ENCODE measurements at regions of chr17 and their contacts with region 1.

Region 1: DNA sequence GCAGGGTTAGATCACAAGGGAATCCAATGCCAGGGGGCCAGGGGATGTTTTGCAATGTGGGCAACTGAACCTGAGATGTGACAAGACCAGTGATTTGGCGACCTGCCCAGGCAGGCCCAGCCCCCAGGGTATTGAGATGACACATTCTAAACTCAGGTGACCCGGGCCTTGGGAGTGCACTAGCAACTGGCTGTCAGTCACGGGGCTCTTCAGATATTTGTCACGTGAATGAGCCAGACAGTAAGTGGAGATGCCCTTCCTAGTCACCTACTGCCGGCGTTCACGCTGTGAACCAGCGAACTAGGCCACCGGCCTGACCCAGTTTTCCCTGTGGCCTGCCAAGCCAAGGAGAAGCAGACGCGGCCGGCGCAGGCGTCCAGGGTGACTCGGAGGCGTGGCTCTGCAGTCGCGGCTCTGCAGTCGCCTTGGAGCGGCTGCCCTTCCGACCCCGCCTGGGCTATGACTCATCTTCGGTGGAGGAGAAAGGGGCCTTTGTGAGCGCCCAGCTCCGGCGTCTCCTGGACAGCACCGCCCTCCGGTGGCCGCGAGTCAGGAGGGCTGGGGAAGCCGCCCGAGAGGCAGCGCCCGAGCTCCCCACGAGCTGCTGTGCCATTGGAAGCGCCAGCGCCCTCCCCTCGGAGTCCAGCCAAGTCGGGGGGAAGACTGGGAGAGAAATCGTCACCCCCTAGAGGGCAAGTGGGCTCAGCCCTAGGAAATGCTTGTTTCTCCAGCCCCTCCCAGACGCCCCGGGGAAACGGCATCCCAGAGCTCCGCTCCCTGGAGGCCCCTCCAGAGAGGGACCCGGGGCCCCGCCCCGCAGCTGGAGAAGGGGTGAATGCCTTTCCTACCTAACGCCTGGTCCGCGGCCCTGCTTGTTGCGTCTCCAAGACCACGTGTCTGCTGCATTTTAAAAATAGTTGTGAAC is 38.8 kb downstream of the WSB1 start:
- H3K4me3 ChIP-seq: peak overlapping the region; percentile 48
- H3K27ac ChIP-seq: peak overlapping the region; percentile 84
- H3K4me1 ChIP-seq: peaks cover 2% of the 10 kb centered on the region; the same call in 1 of the 2 replicates
- CTCF ChIP-seq: peak; percentile 99

Region 2: DNA sequence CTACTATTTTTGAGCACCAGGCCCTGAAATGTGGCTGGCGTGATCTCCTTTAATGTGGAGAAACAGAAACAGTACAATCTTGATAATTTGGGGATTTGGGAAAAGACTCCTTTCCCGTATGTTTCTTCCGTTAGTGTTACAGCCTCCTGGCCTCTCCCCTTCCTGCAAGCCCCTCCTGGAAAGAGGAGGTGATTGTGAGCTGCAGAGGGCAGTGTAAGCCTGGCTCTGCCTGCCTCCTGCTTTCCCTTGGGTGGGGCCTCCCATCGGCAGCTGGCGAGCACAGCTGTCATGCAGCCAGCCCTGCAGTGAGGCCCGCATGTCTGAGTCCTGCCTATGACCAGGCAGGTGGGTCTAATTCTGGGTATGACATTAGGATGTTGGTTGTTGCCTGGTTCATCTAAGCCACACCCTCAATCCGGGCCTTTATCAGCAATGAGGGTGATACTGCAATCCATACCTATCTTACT is 87.5 kb before region 1 on chr17:
- CTCF ChIA-PET with region 1: interaction called, 100 read pairs
- POLR2A ChIA-PET with region 1: interaction called, 4 read pairs
- H3K4me3 ChIP-seq: no peak overlapping the region
- H3K27ac ChIP-seq: no peak overlapping the region
- H3K4me1 ChIP-seq: peaks cover 7% of the 10 kb centered on the region; the same call in 1 of the 2 replicates
- CTCF ChIP-seq: peak; percentile 90

Region 3: GRCh38 chr17:27315322-27315721 is 17.4 kb before region 1 on chr17:
- CTCF ChIA-PET with region 1: interaction called, 17 read pairs
- POLR2A ChIA-PET with region 1: interaction called, 6 read pairs
- H3K4me3 ChIP-seq: no peak overlapping the region
- H3K27ac ChIP-seq: peak overlapping the region; percentile 66
- H3K4me1 ChIP-seq: peaks cover 13% of the 10 kb centered on the region
- CTCF ChIP-seq: no peak

Measured in HEK293 (cell line).